ENCODE measurements at regions of chr1 and their contacts with region 1.

Region 1: GRCh38 chr1:164588516-164589341 is 29.7 kb downstream of the PBX1 start:
- DNase-seq: peak; percentile 91 to 95
- H3K4me3 ChIP-seq: peak overlapping the region; percentile 32
- H3K4me3 Mint-ChIP-seq: peak overlapping the region; percentile 73
- H3K27ac Mint-ChIP-seq: peak overlapping the region; percentile 97
- H3K4me1 ChIP-seq: peaks cover 52% of the 10 kb centered on the region
- H3K4me1 Mint-ChIP-seq: peaks cover 71% of the 10 kb centered on the region
- H3K27me3 ChIP-seq: no peaks in the 10 kb centered on the region
- H3K27me3 Mint-ChIP-seq: no peaks in the 10 kb centered on the region
- CTCF ChIP-seq: no peak

Region 2: DNA sequence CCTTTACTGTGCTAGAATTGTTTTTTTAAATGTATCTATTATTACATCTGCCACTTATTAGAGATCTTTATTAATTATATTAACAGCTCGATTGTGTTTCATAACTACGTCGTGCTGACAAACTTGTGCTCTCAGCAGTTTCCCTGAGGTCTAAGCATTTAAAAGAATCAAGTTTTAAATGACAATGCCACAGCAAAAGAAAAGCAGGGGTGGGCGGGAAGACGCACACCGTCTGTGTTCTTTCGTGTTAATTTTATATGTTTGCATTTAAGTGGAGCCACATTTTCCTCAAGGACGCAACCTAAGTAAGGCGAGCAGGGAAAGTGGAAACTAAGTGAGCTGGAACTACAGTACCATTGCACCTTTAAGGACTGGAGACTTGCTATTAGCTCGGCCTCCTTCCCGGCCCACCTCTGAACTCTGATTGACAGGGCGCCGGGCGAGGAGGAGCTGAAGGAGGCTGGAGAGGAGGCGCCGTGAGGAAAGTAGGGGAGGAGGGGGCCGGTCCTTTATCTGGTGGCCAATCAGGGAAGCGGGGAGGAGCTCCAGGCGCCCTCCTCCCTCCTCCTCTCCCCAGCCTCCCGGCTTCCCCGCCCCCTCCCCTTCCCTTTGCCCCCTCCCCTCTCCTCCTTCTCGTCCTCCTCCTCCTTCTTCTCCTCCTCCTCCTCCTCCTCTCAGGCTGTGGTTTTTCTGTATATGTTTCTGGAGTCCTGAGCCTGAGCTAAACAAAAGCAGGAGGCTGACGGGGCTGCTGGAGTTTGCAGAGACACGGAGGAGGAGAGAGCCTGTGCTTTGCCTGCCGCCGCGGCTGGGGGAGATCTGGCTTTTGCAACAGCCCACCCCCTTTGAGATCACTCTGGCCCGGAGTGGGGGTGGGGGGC is 30.0 kb before region 1 on chr1 and contains the start of gene PBX1:
- CTCF ChIA-PET with region 1: interaction called, 4 read pairs
- POLR2A ChIA-PET with region 1: interaction called, 15 read pairs
- intact Hi-C with region 1: loop called (anchors 1 kb)
- DNase-seq: peak; percentile 97 to 99
- H3K4me3 ChIP-seq: peak within 1 kb of the TSS; percentile 74
- H3K4me3 Mint-ChIP-seq: peak within 1 kb of the TSS; percentile 81
- H3K27ac Mint-ChIP-seq: peak within 1 kb of the TSS; percentile 46
- H3K4me1 ChIP-seq: peaks cover 20% of the 10 kb centered on the region
- H3K4me1 Mint-ChIP-seq: peaks cover 7% of the 10 kb centered on the region
- H3K27me3 ChIP-seq: no peaks in the 10 kb centered on the region
- H3K27me3 Mint-ChIP-seq: no peaks in the 10 kb centered on the region
- CTCF ChIP-seq: no peak
- total RNA-seq, gene PBX1: 101 and 103 TPM in 2 replicates

Region 3: DNA sequence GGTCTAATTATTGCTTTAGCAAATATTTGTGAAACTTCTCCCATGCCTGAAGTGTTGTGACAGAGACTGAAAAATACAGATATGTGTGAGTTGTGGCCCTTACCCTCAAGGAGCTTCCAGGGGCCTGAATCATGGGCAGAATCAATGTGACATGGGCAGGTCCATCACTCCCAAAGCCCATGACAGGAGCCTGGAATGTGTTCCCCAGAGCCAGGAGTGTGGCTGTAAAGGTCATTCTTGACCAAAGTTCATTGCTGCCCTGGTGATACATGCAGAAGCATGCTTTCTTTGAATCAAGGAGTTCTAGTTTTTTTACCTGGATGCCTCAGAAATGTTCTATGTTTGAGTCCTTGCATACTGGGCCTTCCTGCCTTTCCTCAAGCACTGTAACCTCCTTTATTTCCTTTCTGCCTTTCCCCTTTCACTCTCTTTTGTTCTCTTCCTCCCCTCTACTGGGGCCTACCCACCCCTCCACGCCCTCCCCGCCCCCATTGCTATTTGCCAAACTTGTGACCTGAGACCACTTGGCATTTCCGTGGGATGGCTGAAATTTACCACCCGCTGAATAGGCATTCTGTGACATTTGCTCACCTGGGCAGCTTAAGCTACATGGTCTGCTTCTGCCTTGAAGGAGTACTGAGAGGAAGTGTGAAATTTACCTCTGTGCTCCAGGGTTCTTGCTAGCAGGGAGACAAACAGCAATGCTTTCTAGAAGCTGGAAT is 10.1 kb before region 1 on chr1:
- CTCF ChIA-PET with region 1: no interaction called
- POLR2A ChIA-PET with region 1: no interaction called
- intact Hi-C with region 1: loop called (anchors 1 kb)
- DNase-seq: peak; percentile 23 to 55
- H3K4me3 ChIP-seq: no peak overlapping the region
- H3K4me3 Mint-ChIP-seq: no peak overlapping the region
- H3K27ac Mint-ChIP-seq: peak overlapping the region; percentile 69
- H3K4me1 ChIP-seq: peaks cover 24% of the 10 kb centered on the region
- H3K4me1 Mint-ChIP-seq: peaks cover 32% of the 10 kb centered on the region
- H3K27me3 ChIP-seq: no peaks in the 10 kb centered on the region
- H3K27me3 Mint-ChIP-seq: no peaks in the 10 kb centered on the region
- CTCF ChIP-seq: no peak

Region 4: DNA sequence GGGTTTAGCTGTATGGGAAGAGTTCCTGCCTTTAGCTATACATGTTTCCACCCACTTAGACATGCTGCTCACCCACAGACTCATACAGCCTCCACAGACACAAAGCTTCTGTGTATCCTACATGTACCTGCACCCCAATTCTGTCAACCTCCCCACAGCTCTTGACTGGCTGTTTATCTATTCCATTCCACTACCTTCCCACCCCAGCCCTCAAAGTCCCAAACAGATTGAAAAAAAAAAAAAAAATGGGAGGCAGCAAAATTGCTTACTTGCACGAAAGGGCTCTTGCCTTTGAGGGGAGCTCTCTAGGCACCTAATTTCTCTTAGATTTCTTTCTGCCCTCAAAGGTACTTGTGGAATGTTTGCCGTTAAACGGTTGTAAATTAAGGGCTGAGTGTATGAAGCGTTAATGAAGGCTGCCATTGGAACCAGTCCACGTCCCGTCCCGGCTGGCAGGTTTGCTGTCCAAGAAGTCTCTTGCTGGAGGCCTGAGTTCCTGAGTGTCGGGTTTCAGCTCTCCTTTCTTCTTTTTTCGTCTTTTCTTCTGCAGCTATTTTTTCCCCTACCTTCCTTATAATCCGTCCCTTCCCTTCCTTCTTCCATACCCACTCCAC is 13.9 kb after region 1 on chr1:
- CTCF ChIA-PET with region 1: interaction called, 5 read pairs
- POLR2A ChIA-PET with region 1: interaction called, 10 read pairs
- intact Hi-C with region 1: loop called (anchors 1 kb)
- DNase-seq: peak in 1 of 2 experiments; percentile 41
- H3K4me3 ChIP-seq: peak overlapping the region; percentile 15; the same call in 1 of the 2 replicates
- H3K4me3 Mint-ChIP-seq: peak overlapping the region; percentile 77
- H3K27ac Mint-ChIP-seq: peak overlapping the region; percentile 93
- H3K4me1 ChIP-seq: peaks cover 53% of the 10 kb centered on the region
- H3K4me1 Mint-ChIP-seq: peaks cover 42% of the 10 kb centered on the region
- H3K27me3 ChIP-seq: no peaks in the 10 kb centered on the region
- H3K27me3 Mint-ChIP-seq: no peaks in the 10 kb centered on the region
- CTCF ChIP-seq: no peak

Region 5: DNA sequence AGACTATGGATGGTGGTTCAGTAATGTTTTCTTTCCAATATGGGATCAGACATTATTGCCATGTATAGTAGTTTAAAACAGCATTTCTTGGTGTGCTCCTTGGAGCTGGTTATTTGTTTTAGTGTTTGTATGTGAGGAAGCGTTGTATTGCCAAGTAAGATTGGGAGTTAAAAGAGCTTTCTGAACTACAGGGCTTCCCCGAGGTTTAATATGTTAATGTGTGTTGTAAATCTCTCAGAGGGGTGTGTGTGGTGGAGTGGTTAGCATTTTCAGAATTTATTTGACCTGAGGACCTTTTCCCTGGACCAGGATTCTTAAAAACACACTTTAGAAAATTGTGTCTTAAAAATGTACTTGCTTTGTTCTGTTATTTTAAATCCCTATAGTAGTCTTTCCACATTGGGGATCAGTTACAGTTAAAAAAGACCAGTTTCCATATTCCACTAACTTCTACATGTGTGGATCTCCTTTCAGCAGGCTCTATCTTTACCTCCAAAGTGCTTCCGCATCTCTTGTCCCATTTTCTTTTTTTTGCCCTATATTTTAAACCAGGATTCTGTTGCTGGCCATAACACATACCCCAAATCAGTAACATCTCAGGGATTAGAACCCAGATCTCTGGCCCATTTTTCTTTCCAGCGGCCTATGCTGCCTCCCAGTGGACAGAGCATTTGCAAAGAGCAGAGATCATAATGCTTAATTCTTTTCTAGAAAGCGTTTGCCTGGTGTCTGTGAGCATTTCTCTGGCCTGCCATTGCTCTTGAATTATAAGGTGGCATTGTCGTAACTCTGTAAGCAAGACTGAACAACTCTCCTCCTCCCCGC is 28.9 kb after region 1 on chr1:
- CTCF ChIA-PET with region 1: interaction called, 4 read pairs
- POLR2A ChIA-PET with region 1: no interaction called
- intact Hi-C with region 1: loop called (anchors 1 kb)
- DNase-seq: peak in 1 of 2 experiments; percentile 47
- H3K4me3 ChIP-seq: no peak overlapping the region
- H3K4me3 Mint-ChIP-seq: no peak overlapping the region
- H3K27ac Mint-ChIP-seq: no peak overlapping the region
- H3K4me1 ChIP-seq: peaks cover 32% of the 10 kb centered on the region
- H3K4me1 Mint-ChIP-seq: peaks cover 30% of the 10 kb centered on the region
- H3K27me3 ChIP-seq: no peaks in the 10 kb centered on the region
- H3K27me3 Mint-ChIP-seq: no peaks in the 10 kb centered on the region
- CTCF ChIP-seq: peak; percentile 44 to 46

Region 6: GRCh38 chr1:164648636-164649035 is 59.9 kb after region 1 on chr1:
- CTCF ChIA-PET with region 1: no interaction called
- POLR2A ChIA-PET with region 1: no interaction called
- intact Hi-C with region 1: loop called (anchors 1 kb)
- DNase-seq: peak; percentile 83 to 85
- H3K4me3 ChIP-seq: no peak overlapping the region
- H3K4me3 Mint-ChIP-seq: peak overlapping the region; percentile 44
- H3K27ac Mint-ChIP-seq: peak overlapping the region; percentile 80
- H3K4me1 ChIP-seq: peaks cover 59% of the 10 kb centered on the region
- H3K4me1 Mint-ChIP-seq: peaks cover 59% of the 10 kb centered on the region
- H3K27me3 ChIP-seq: no peaks in the 10 kb centered on the region
- H3K27me3 Mint-ChIP-seq: no peaks in the 10 kb centered on the region
- CTCF ChIP-seq: no peak

Region 7: DNA sequence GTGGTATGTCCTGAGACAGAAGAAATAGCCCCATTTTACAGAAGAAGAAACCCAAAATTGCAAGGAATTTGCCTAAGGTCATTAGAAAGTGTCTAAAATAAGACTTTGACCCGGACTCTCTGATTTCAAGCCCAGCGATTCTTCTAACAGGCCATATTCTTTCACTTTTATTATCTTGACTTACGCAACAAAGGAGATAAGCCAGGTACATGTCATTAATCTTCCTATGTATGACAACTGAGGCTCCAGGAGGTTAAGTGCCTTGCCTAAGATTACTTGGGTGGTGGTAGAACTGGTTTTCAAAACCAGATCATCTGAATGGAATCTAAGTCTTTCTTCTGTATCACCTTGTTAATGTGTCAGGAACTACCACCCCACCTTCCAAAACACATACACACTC is 94.5 kb after region 1 on chr1:
- CTCF ChIA-PET with region 1: no interaction called
- POLR2A ChIA-PET with region 1: no interaction called
- intact Hi-C with region 1: loop called (anchors 2 kb)
- DNase-seq: peak; percentile 78 to 85
- H3K4me3 ChIP-seq: no peak overlapping the region
- H3K4me3 Mint-ChIP-seq: peak overlapping the region; percentile 67
- H3K27ac Mint-ChIP-seq: peak overlapping the region; percentile 89
- H3K4me1 ChIP-seq: peaks cover 61% of the 10 kb centered on the region
- H3K4me1 Mint-ChIP-seq: peaks cover 42% of the 10 kb centered on the region
- H3K27me3 ChIP-seq: no peaks in the 10 kb centered on the region
- H3K27me3 Mint-ChIP-seq: no peaks in the 10 kb centered on the region
- CTCF ChIP-seq: no peak